Uterus (tissue), 4 donors: ENCODE measurements at regions of chr12 and their contacts with region 1.

Region 1: GRCh38 chr12:116382686-116383531 is 105.4 kb upstream of the MED13L start:
- DNase-seq: peak; percentile 87 to 94
- H3K4me3 ChIP-seq: no peak overlapping the region
- H3K27ac ChIP-seq: peak overlapping the region; percentile 60 to 72
- H3K4me1 ChIP-seq: peaks cover 0 to 10% of the 10 kb centered on the region in 2 donors
- H3K27me3 ChIP-seq: no peaks in the 10 kb centered on the region
- CTCF ChIP-seq: peak in 1 of 4 experiments; percentile 40
- POLR2A ChIP-seq: no peak

Region 2: GRCh38 chr12:116434155-116435011 is 51.5 kb after region 1 on chr12:
- intact Hi-C with region 1: loop called (anchors 10 kb)
- DNase-seq: peak; percentile 88 to 91
- H3K4me3 ChIP-seq: peak overlapping the region; percentile 0 to 28
- H3K27ac ChIP-seq: peak overlapping the region; percentile 73 to 75
- H3K4me1 ChIP-seq: peaks cover 0 to 8% of the 10 kb centered on the region in 2 donors
- H3K27me3 ChIP-seq: no peaks in the 10 kb centered on the region
- CTCF ChIP-seq: no peak
- POLR2A ChIP-seq: no peak